ENCODE measurements at regions of chr19 and their contacts with region 1.

Region 1: DNA sequence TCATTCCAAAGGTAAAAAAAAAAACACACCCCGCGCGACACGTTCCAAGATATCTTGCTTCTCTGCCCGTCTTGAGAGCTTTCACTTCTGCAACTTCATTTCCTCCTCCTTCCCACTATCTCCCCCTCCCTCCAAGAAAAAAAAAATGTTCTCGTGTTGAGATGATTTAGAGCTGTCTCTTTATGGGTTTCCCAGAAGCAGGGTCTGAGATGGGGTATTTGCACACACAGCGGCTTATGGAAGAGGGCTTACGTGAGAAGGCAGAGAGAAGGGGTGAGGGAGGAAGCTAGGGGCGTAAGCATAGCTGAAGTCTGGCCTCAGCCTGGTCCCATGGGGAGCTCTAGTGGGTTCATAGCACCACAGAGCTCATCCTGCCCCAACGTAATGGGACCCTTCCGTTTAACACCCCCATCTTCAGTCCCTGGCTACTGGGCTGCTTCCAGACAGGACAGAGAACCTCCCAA is 31.3 kb upstream of the USE1 start:
- DNase-seq: no peak
- H3K27ac ChIP-seq: peak overlapping the region; percentile 6; the same call in 1 of the 2 replicates
- CTCF ChIP-seq: no peak

Region 2: GRCh38 chr19:17260842-17261325 is 77.0 kb after region 1 on chr19:
- CTCF ChIA-PET with region 1: interaction called, 15 read pairs
- POLR2A ChIA-PET with region 1: no interaction called
- DNase-seq: peak; percentile 94
- H3K27ac ChIP-seq: peak overlapping the region; percentile 52
- CTCF ChIP-seq: peak; percentile 99

Measured in RWPE1 (cell line).